ENCODE measurements at regions of chr16 and their contacts with region 1.

Region 1: DNA sequence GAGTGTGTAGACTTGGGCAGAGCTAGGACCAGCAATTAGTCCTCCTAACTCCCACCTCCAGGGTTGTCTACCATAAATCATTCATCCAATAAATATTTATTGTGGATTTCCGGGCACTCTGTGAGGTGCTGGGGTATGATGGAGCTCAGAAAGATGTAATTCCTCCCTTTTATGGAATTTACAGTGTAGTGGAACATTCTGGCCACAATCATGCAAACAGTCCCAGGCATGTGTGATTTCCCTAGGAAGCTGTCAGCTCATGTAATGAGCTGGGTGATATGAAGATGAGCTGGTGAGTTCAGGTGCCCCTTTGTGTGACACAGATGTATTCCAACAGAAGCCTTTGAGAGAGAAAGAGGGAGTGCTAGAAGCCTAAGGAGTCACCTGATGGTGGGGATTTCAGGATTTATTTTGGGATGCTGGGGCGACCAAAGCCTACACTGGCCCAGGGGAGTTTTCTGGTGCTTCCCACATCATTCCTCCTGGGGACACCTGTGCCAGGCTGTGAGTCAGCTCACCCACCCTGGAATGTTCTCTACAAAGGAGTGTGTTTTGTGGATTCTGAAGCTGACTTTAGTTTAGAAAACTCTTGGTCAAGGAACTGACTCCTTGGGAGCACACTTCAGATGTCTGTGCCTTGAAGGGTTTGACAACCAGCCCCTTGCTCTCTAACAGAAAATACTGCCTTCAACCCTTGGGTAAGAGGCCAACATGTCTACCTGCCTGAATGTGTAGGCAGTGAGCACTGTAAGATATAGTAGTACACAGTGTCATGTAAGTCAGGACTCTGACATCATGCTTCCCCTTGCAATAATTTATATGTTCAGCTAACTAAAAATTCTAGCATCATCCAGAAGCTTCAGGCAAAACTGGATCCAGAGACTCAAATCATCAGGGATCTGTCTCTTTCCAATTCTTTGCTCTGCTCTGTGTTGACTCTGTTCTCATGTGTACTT is 42.9 kb downstream of the HS3ST4 start:
- DNase-seq: no peak
- H3K4me3 ChIP-seq: no peak overlapping the region
- H3K27ac ChIP-seq: no peak overlapping the region
- H3K4me1 ChIP-seq: no peaks in the 10 kb centered on the region
- H3K27me3 ChIP-seq: no peaks in the 10 kb centered on the region
- CTCF ChIP-seq: no peak
- POLR2A ChIP-seq: no peak

Region 2: DNA sequence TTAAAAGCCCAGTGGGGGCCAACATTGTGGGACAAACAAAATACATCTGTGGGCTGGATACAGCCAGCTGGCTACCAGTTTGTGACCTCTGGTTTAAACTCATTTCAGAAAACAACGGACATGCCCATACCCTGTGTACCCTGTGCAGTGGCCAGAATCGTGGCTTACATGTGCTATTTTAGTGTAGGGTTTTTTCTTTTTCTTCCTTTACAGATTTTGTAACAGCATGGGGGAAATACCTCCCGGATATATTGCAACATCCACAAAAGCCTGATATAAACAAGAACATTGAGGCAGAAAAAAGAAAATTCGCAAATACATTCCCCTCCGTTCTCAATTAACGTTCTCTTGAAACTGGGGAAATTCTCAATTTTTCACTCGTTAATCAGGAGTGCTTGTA is 35.6 kb before region 1 on chr16:
- intact Hi-C with region 1: loop called (anchors 5 kb)
- DNase-seq: no peak
- H3K4me3 ChIP-seq: no peak overlapping the region
- H3K27ac ChIP-seq: no peak overlapping the region
- H3K4me1 ChIP-seq: no peaks in the 10 kb centered on the region
- H3K27me3 ChIP-seq: no peaks in the 10 kb centered on the region
- CTCF ChIP-seq: no peak
- POLR2A ChIP-seq: no peak